ENCODE measurements at regions of chr17 and their contacts with region 1.

Region 1: GRCh38 chr17:6413065-6413464 is 21.9 kb downstream of the AIPL1 start:
- DNase-seq: peak; percentile 65 to 84
- ATAC-seq: peak; percentile 72 to 89
- H3K4me3 ChIP-seq: no peak overlapping the region
- H3K27ac ChIP-seq: no peak overlapping the region
- H3K4me1 ChIP-seq: no peaks in the 10 kb centered on the region
- CTCF ChIP-seq: peak; percentile 77
- EP300 ChIP-seq: no peak
- POLR2A ChIP-seq: no peak
- RAD21 ChIP-seq: peak; percentile 85 to 93

Region 2: DNA sequence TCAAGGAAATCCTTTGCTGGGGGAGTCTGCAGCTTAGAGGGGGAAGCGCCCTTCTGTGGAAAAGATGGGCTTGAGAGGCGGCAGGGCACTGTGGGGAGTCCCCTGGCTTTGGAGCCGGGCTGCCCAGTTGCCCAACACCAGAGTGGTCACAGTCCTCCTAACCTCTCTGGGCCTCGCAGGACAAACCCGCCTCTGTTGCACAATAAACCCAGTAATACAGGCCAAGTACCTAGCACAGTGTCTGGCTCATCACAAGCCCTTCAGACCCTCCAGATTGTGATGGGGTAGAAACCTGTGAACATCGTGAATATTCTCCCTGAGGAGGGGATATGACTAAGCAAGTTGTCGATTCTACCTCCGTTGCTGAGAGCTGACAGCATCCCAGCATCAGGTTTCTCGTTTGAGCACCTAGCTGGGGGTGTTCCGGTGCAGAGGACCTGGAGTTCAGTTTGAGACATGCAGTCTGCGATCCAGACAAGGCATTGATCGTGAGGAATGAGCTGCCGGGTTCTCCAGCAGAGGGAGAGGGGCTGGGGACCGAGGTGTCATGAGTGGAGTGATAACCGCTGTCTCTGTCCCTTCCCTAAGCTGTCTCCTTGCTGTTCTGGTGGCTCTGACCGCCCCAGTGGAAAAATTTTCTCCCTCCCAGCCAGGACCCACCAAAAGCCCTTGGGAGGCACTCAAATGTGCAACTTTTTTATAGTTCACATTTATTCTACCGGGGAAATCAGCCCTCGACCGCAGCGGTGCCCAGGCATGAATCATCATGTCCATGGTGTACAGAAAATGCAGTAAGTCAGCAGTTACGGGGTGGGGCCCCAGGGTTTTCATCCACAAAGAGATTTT is 181.0 kb before region 1 on chr17:
- CTCF ChIA-PET with region 1: interaction called, 11 read pairs
- POLR2A ChIA-PET with region 1: no interaction called
- DNase-seq: peak in 1 of 2 experiments; percentile 37
- ATAC-seq: peak; percentile 80 to 82
- H3K4me3 ChIP-seq: 0 out of 3 replicates have a peak overlapping the region, but pooled peaks have one; percentile 12
- H3K27ac ChIP-seq: peak overlapping the region; percentile 34 to 61; a peak in 3 of 6 replicates
- H3K4me1 ChIP-seq: peaks cover 16% of the 10 kb centered on the region
- CTCF ChIP-seq: no peak
- EP300 ChIP-seq: no peak
- POLR2A ChIP-seq: no peak
- RAD21 ChIP-seq: no peak

Region 3: DNA sequence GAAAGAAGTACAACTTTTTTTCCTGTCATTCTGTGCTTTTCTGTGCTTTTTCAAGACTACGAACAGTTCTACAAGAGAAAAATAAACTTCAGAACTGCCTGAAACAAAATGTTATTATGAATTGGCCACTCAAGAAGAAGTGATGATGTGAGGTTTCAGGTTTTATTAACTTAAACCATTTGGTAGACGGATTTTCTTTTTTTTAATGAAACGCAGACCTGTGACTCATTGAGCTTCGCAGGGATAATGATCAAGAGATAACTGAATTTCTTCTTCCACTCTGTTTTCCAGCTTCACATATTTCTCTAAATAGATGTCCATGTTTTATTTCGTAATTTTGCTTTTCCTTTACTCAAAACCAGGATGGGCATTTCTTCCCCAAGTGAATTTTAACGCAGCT is 10.8 kb before region 1 on chr17:
- CTCF ChIA-PET with region 1: interaction called, 17 read pairs
- POLR2A ChIA-PET with region 1: no interaction called
- DNase-seq: no peak
- ATAC-seq: no peak
- H3K4me3 ChIP-seq: no peak overlapping the region
- H3K27ac ChIP-seq: no peak overlapping the region
- H3K4me1 ChIP-seq: no peaks in the 10 kb centered on the region
- CTCF ChIP-seq: no peak
- EP300 ChIP-seq: no peak
- POLR2A ChIP-seq: no peak
- RAD21 ChIP-seq: no peak